Activated CD4-positive, alpha-beta memory T cell treated with anti-CD3 and anti-CD28 coated beads for 36 hours (primary cell): ENCODE measurements at regions of chrX and their contacts with region 1.

Region 1: GRCh38 chrX:79146640-79147390 is 2.3 kb downstream of the GPR174 start:
- DNase-seq: peak; percentile 10
- H3K4me3 Mint-ChIP-seq: peak overlapping the region; percentile 93
- H3K27ac Mint-ChIP-seq: peak overlapping the region; percentile 95
- H3K4me1 Mint-ChIP-seq: peaks cover 35% of the 10 kb centered on the region
- H3K27me3 Mint-ChIP-seq: no peaks in the 10 kb centered on the region

Region 2: GRCh38 chrX:79096145-79096556 is 50.7 kb before region 1 on chrX:
- CTCF ChIA-PET with region 1: interaction called, 3 read pairs
- POLR2A ChIA-PET with region 1: interaction called, 6 read pairs
- intact Hi-C with region 1: loop called (anchors 2 kb)
- DNase-seq: no peak
- H3K4me3 Mint-ChIP-seq: peak overlapping the region; percentile 60
- H3K27ac Mint-ChIP-seq: peak overlapping the region; percentile 89
- H3K4me1 Mint-ChIP-seq: peaks cover 77% of the 10 kb centered on the region
- H3K27me3 Mint-ChIP-seq: no peaks in the 10 kb centered on the region

Region 3: GRCh38 chrX:79117078-79117477 is 29.7 kb before region 1 on chrX:
- CTCF ChIA-PET with region 1: no interaction called
- POLR2A ChIA-PET with region 1: no interaction called
- intact Hi-C with region 1: no loop called
- DNase-seq: no peak
- H3K4me3 Mint-ChIP-seq: no peak overlapping the region
- H3K27ac Mint-ChIP-seq: no peak overlapping the region
- H3K4me1 Mint-ChIP-seq: peaks cover 38% of the 10 kb centered on the region
- H3K27me3 Mint-ChIP-seq: no peaks in the 10 kb centered on the region

Region 4: GRCh38 chrX:79161655-79162054 is 14.8 kb after region 1 on chrX:
- CTCF ChIA-PET with region 1: interaction called, 4 read pairs
- POLR2A ChIA-PET with region 1: interaction called, 57 read pairs
- intact Hi-C with region 1: loop called (anchors 1 kb)
- DNase-seq: peak; percentile 50
- H3K4me3 Mint-ChIP-seq: peak overlapping the region; percentile 81
- H3K27ac Mint-ChIP-seq: peak overlapping the region; percentile 98
- H3K4me1 Mint-ChIP-seq: peaks cover 55% of the 10 kb centered on the region
- H3K27me3 Mint-ChIP-seq: no peaks in the 10 kb centered on the region

Region 5: DNA sequence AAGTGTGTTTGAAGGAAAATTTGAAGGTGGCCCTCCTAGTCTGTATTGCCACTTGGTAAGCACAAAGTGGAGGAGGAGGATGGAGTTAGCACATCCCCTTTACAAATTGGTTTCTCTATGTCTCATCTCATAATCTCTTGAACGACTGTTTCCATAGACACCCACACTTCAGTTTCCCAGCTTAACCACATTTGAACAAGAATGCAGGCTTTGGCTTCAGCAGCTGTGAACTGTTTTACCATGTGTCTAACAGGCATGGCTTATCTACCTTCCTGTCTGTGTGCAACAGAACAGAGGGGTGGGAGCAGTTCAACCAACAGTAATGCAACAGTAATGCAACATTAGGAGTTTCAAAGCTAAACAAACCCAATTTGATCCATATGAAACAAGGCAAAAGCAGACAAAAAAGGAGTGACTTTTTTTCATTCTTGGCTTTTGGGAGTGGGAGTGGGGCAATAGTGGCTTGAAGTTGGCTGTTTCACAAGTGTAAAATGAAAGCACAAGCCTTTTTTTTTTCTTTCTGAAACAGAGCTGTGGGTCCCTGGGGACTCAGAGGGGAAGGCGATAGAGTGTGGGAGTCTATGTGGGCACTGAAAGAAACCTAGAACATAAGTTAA is 112.4 kb after region 1 on chrX:
- CTCF ChIA-PET with region 1: no interaction called
- POLR2A ChIA-PET with region 1: no interaction called
- intact Hi-C with region 1: loop called (anchors 5 kb)
- DNase-seq: peak; percentile 58
- H3K4me3 Mint-ChIP-seq: peak overlapping the region; percentile 57
- H3K27ac Mint-ChIP-seq: peak overlapping the region; percentile 91
- H3K4me1 Mint-ChIP-seq: peaks cover 81% of the 10 kb centered on the region
- H3K27me3 Mint-ChIP-seq: no peaks in the 10 kb centered on the region

Region 6: DNA sequence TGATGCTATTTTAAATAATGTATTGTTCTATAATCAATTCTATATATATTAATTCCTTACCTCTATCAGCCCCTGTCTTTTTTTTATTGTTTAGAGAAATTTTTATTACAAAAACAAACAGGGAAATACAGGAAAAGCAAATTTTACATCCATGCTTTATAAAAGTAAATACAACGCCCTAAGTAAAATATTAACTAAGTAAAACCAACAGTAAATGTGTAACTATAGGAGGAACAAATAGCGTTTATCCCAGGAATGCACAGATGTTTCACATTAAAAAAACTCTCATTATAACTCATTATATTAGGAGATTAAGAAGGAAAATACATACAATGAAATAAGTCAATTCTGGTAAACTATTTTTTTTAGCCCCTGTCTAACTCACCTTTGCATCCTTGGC is 228.5 kb after region 1 on chrX:
- CTCF ChIA-PET with region 1: no interaction called
- POLR2A ChIA-PET with region 1: no interaction called
- intact Hi-C with region 1: no loop called
- DNase-seq: no peak
- H3K4me3 Mint-ChIP-seq: no peak overlapping the region
- H3K27ac Mint-ChIP-seq: no peak overlapping the region
- H3K4me1 Mint-ChIP-seq: peaks cover 12% of the 10 kb centered on the region
- H3K27me3 Mint-ChIP-seq: no peaks in the 10 kb centered on the region